A549 (cell line): ENCODE measurements at regions of chr20 and their contacts with region 1.

Region 1: GRCh38 chr20:38472513-38473372 is at the start of gene RALGAPB:
- DNase-seq: peak; percentile 96 to 99
- ATAC-seq: peak; percentile 96 to 98
- H3K4me3 ChIP-seq: peak within 1 kb of the TSS; percentile 89
- H3K27ac ChIP-seq: peak within 1 kb of the TSS; percentile 87 to 93
- H3K4me1 ChIP-seq: peaks cover 18% of the 10 kb centered on the region
- CTCF ChIP-seq: peak; percentile 52
- EP300 ChIP-seq: no peak
- POLR2A ChIP-seq: peak; percentile 52
- RAD21 ChIP-seq: peak; percentile 30 to 41; a peak in 4 of 5 replicates
- polyA plus RNA-seq, gene RALGAPB: 35.9 and 38.9 TPM in 2 replicates

Region 2: DNA sequence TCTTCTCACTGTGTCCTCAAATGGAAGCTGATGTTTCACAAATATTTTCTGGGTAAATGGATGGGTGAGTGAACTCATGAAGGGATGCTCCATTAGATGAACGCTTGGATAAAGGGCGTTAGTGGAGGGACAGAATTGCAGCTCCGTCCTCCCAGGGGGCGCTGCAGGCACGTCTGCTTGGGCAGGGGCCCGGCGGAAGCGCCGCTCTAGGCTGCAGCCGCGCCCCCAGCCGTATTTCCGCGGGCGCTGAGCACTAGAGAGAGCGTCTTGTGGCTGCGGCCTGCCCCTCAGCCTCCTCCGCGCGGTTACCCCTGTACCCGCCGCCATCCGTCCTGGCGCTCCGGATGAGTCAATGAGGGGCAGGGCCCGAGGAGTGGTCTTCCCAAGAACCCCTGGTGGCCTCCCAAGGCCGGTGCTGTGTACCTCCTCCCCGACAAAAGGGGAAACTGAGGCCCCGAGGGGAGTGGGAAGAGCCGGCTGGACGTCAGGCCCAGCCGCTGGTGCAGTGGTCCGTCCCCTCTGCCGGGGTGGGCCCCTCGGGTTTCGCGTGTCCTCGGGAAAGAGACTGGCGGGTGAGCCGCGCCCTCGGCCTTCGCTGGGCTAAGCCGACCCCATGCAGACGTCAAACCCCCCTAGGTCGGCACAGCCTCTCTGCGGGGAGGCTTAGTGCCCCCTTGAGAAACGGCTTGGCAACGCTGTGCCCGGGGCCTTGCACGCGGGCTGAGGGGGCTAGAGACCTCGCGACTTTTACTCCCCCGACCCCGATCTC is 26.1 kb before region 1 on chr20:
- CTCF ChIA-PET with region 1: interaction called, 110 read pairs
- POLR2A ChIA-PET with region 1: interaction called, 24 read pairs
- DNase-seq: peak; percentile 72 to 95
- ATAC-seq: peak; percentile 93 to 96
- H3K4me3 ChIP-seq: peak overlapping the region; percentile 86
- H3K27ac ChIP-seq: peak overlapping the region; percentile 91 to 97
- H3K4me1 ChIP-seq: peaks cover 14% of the 10 kb centered on the region
- CTCF ChIP-seq: peak; percentile 94
- EP300 ChIP-seq: no peak
- POLR2A ChIP-seq: peak; percentile 88
- RAD21 ChIP-seq: peak; percentile 48 to 56; a peak in 4 of 5 replicates

Region 3: DNA sequence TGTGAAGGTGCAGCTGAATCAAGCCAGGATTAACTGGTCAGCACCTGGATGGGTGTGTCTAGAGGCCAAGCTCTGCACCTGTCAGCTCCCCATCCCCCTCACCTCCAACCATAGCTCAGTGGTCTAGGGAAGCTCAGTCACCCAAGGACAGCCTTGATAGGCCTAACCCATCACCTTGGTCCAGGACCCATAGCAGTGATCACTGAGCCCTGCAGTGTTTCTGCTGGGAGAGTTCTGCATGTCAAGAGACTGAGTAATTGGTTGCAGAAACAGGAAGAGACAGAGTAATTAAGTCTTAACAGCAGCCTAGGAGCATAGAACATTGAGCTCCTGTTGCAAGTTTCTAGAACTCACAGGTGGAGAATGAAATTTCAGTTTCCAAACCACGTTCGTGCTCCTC is 18.8 kb before region 1 on chr20:
- CTCF ChIA-PET with region 1: interaction called, 110 read pairs
- POLR2A ChIA-PET with region 1: no interaction called
- DNase-seq: no peak
- ATAC-seq: no peak
- H3K4me3 ChIP-seq: no peak overlapping the region
- H3K27ac ChIP-seq: no peak overlapping the region
- H3K4me1 ChIP-seq: 0 out of 3 replicates have a peak, but pooled peaks cover 5% of the 10 kb centered on the region
- CTCF ChIP-seq: no peak
- EP300 ChIP-seq: no peak
- POLR2A ChIP-seq: no peak
- RAD21 ChIP-seq: no peak

Region 4: DNA sequence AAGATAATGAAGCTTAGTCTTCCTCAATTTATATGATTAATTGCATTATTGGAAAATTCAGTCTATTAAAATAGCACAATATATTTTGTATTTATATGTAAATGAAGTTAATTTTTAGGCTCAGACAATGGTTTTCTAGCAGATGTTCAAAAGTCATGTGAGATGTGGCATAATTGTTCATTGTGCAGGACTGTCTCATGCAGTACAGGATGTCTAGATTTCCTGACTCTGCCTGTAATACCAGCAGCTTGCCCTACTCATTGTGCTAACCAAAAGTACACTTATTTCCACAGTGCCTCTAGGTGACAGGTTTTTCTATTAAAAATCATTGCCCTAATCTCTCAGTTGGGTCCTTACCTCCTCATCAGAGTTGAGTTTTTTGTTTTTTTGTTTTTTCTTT is 12.3 kb after region 1 on chr20:
- CTCF ChIA-PET with region 1: interaction called, 30 read pairs
- POLR2A ChIA-PET with region 1: interaction called, 5 read pairs
- DNase-seq: no peak
- ATAC-seq: no peak
- H3K4me3 ChIP-seq: no peak overlapping the region
- H3K27ac ChIP-seq: no peak overlapping the region
- H3K4me1 ChIP-seq: no peaks in the 10 kb centered on the region
- CTCF ChIP-seq: no peak
- EP300 ChIP-seq: no peak
- POLR2A ChIP-seq: no peak
- RAD21 ChIP-seq: no peak

Region 5: GRCh38 chr20:38514185-38514584 is 41.4 kb after region 1 on chr20:
- CTCF ChIA-PET with region 1: no interaction called
- POLR2A ChIA-PET with region 1: no interaction called
- DNase-seq: no peak
- ATAC-seq: no peak
- H3K4me3 ChIP-seq: no peak overlapping the region
- H3K27ac ChIP-seq: no peak overlapping the region
- H3K4me1 ChIP-seq: no peaks in the 10 kb centered on the region
- CTCF ChIP-seq: no peak
- EP300 ChIP-seq: no peak
- POLR2A ChIP-seq: no peak
- RAD21 ChIP-seq: no peak

Region 6: GRCh38 chr20:38893565-38894090 is 420.9 kb after region 1 on chr20:
- CTCF ChIA-PET with region 1: no interaction called
- POLR2A ChIA-PET with region 1: no interaction called
- DNase-seq: peak; percentile 63 to 83
- ATAC-seq: peak; percentile 89 to 97
- H3K4me3 ChIP-seq: peak overlapping the region; percentile 37
- H3K27ac ChIP-seq: peak overlapping the region; percentile 53 to 76; a peak in 5 of 6 replicates
- H3K4me1 ChIP-seq: peaks cover 9% of the 10 kb centered on the region; the same call in 1 of the 3 replicates
- CTCF ChIP-seq: peak; percentile 82
- EP300 ChIP-seq: no peak
- POLR2A ChIP-seq: no peak
- RAD21 ChIP-seq: peak; percentile 78 to 89